A549 (cell line): ENCODE measurements at regions of chr16 and their contacts with region 1.

Region 1: DNA sequence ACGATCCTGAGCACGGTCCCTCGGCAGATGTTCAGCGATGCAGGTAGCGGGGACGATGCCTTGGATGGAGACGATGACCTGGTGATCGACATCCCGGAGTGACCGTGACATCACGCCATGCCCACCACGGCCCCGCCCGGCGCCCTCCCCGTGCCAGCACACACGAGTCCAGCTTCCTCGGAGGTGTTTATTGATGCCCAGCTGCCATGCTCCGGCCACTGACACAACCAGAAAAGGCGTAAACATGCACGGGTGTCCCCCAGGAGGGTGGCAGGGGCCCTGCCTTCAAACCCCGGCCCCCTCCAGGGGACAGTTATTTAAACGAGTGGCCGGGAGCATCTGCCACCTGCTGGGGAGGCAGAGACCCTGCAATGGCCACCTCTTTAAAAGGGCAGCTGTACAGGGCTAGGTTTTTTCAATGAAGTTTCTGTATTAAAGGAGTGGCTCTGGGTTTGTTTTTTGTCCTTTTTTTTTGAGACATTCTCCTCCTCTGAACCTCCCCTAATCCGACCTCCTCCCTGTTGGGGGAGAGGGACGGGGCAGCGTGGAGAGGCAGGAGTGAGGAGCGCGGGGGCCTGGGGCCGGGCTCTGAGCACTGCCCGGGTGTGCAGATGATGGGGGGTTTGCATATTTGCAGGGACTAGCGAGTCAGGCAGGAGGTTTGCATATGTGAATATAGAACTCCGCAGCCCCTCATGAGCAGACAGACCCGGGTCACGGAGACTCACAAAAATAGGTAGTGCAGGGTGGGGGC is 5.3 kb downstream of the DOC2A start:
- DNase-seq: peak; percentile 59 to 90
- ATAC-seq: peak; percentile 54 to 78; a peak in 5 of 6 replicates
- H3K4me3 ChIP-seq: no peak overlapping the region
- H3K27ac ChIP-seq: peak overlapping the region in 1 of 2 experiments; percentile 38; a peak in 3 of 6 replicates
- H3K4me1 ChIP-seq: peaks cover 10% of the 10 kb centered on the region; the same call in 2 of the 3 replicates
- CTCF ChIP-seq: peak; percentile 78
- EP300 ChIP-seq: no peak
- POLR2A ChIP-seq: no peak
- RAD21 ChIP-seq: peak; percentile 64 to 71

Region 2: GRCh38 chr16:29700253-29700987 is 305.1 kb before region 1 on chr16:
- CTCF ChIA-PET with region 1: interaction called, 12 read pairs
- POLR2A ChIA-PET with region 1: no interaction called
- DNase-seq: peak; percentile 92 to 96
- ATAC-seq: peak; percentile 93 to 94
- H3K4me3 ChIP-seq: no peak overlapping the region
- H3K27ac ChIP-seq: peak overlapping the region; percentile 34 to 55; a peak in 5 of 6 replicates
- H3K4me1 ChIP-seq: peaks cover 4% of the 10 kb centered on the region; the same call in 1 of the 3 replicates
- CTCF ChIP-seq: peak; percentile 96
- EP300 ChIP-seq: no peak
- POLR2A ChIP-seq: no peak
- RAD21 ChIP-seq: peak; percentile 94 to 95

Region 3: DNA sequence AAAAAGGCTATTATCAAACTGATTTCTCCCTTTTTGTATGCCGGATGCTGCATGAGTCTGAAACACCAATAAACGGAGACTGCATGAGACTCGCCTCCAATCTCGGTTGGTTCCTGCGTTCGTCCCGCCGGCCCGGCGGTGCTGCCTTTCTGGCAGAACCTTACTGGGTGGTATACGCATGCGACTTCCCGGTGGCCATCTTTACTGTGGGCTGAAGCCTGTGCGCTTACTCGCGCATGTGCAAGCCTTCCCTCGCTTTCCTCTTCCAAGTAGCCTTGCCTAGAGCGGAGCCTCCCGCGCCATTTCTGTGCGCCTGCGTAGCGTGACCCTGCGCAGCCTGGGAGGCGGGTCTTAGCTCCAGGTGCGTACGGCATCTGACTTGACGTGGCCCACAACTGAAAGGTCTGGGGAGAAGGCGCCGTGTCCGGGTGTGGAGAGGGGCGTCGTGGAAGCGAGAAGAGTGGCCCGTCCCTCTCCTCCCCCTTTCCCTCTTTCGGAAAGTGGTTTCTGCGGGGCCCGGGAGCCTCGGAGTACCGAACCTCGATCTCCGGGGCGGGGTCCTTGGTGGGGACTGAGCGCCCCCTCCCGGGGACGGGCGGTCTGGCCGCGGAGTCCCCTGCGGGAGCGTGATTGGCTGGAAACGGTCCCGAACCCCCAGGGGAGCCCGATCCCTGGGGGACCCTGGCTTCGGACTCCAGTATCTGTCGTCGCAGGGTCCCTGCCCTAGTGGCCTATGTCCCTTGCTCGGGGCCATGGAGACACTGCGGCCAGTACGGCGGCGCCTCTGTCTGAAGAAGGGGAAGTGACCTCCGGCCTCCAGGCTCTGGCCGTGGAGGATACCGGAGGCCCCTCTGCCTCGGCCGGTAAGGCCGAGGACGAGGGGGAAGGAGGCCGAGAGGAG is 189.5 kb before region 1 on chr16 and contains the start of gene PAGR1:
- CTCF ChIA-PET with region 1: interaction called, 18 read pairs
- POLR2A ChIA-PET with region 1: interaction called, 3 read pairs
- DNase-seq: peak; percentile 95 to 100
- ATAC-seq: peak; percentile 49 to 72
- H3K4me3 ChIP-seq: peak within 1 kb of the TSS; percentile 92
- H3K27ac ChIP-seq: peak within 1 kb of the TSS; percentile 98 to 99
- H3K4me1 ChIP-seq: peaks cover 39% of the 10 kb centered on the region
- CTCF ChIP-seq: peak; percentile 92
- EP300 ChIP-seq: no peak
- POLR2A ChIP-seq: peak; percentile 88
- RAD21 ChIP-seq: peak; percentile 51 to 68
- polyA plus RNA-seq, gene PAGR1: 18.9 and 26.7 TPM in 2 replicates

Region 4: GRCh38 chr16:29915590-29916247 is 89.8 kb before region 1 on chr16:
- CTCF ChIA-PET with region 1: interaction called, 14 read pairs
- POLR2A ChIA-PET with region 1: no interaction called
- DNase-seq: peak; percentile 29 to 37
- ATAC-seq: peak in 1 of 2 experiments; percentile 30; a peak in 2 of 6 replicates
- H3K4me3 ChIP-seq: no peak overlapping the region
- H3K27ac ChIP-seq: peak overlapping the region in 1 of 2 experiments; percentile 58; a peak in 2 of 6 replicates
- H3K4me1 ChIP-seq: peaks cover 9% of the 10 kb centered on the region; the same call in 2 of the 3 replicates
- CTCF ChIP-seq: no peak
- EP300 ChIP-seq: no peak
- POLR2A ChIP-seq: no peak
- RAD21 ChIP-seq: no peak

Region 5: DNA sequence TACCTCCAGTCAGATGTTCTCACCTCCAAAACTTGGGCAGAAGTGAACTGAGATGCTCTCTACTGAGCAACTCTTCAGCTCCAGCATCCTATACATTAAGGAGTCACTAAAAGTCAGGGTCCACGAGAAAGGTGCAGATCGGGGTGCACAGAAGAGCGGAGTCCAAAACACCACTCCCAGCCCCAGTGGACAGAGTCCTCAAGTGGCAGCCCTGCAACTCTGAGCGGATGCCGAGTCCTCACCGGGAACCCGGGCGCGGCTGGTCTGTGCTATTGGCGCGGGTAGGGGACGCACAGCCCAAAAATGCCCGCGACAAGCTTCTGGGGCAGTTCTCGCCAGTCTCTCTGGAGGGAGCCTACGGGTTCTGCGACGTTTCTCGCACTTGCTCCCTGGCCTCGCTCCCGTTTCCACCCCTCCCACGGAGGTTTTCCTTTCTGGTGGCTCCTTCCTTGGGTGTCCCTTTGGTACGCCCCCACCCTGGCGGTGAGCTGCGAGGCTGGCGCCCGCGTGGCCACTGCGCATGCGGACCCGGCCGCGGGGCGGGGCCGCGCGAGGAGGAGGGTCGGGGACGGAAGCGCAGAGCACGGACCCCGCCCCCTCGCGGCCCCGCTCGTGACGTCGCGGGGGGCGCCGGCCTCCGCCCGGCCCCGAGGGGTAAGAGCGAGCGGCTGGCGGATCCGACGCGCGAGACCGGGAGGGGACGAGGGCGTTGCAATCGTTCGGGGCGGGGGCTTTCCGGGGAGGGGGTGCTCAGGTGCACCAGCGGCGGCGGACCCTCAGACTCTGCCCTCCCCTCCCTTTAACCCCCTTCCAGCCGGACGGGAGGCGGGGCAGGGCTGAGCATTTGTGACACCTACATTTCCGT is 43.8 kb before region 1 on chr16 and contains the start of gene TMEM219:
- CTCF ChIA-PET with region 1: interaction called, 10 read pairs
- POLR2A ChIA-PET with region 1: no interaction called
- DNase-seq: peak; percentile 88 to 94
- ATAC-seq: peak; percentile 96 to 97
- H3K4me3 ChIP-seq: peak within 1 kb of the TSS; percentile 74
- H3K27ac ChIP-seq: peak within 1 kb of the TSS; percentile 86 to 96
- H3K4me1 ChIP-seq: peaks cover 12% of the 10 kb centered on the region; the same call in 1 of the 3 replicates
- CTCF ChIP-seq: no peak; the same call in 1 of the 3 replicates
- EP300 ChIP-seq: no peak
- POLR2A ChIP-seq: peak; percentile 53
- RAD21 ChIP-seq: peak in 1 of 2 experiments; percentile 47; a peak in 4 of 5 replicates
- polyA plus RNA-seq, gene TMEM219: 65.1 and 82.5 TPM in 2 replicates

Region 6: DNA sequence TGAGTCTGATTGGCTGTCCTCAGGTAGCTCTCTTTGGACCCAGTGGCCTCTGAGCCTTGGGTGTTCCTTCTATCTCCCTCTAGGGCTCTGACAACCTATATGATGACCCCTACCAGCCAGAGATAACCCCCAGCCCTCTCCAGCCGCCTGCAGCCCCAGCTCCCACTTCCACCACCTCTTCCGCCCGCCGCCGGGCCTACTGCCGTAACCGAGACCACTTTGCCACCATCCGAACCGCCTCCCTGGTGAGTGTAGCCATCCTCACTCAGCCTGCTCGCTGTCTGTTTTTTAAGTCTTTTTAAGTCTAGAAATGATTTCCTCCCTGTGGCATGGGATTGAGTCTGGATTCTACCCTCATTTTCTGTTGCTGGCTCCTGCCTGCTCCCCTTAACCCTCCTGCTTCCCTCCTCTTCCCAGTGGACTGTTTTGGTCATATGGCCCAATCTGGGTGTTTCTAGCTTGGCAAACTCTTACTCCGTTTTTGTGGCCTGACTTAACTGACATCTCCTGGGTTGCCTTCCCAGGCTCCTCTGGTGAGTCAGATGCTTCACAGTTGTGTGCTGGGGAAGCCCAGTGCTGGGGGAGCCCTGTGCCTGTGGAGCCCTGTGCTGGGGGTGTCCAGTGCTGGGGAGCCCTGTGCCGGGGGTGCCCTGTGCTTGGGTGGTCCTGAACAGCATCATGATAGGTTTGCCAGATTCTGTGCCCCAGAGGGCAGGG is 21.9 kb before region 1 on chr16:
- CTCF ChIA-PET with region 1: interaction called, 22 read pairs
- POLR2A ChIA-PET with region 1: no interaction called
- DNase-seq: no peak
- ATAC-seq: no peak
- H3K4me3 ChIP-seq: no peak overlapping the region
- H3K27ac ChIP-seq: no peak overlapping the region
- H3K4me1 ChIP-seq: no peaks in the 10 kb centered on the region
- CTCF ChIP-seq: no peak
- EP300 ChIP-seq: no peak
- POLR2A ChIP-seq: no peak
- RAD21 ChIP-seq: no peak

Region 7: GRCh38 chr16:30068333-30069211 is 63.1 kb after region 1 on chr16:
- CTCF ChIA-PET with region 1: no interaction called
- POLR2A ChIA-PET with region 1: no interaction called
- DNase-seq: peak in 1 of 2 experiments; percentile 59
- ATAC-seq: no peak
- H3K4me3 ChIP-seq: no peak overlapping the region
- H3K27ac ChIP-seq: peak overlapping the region in 1 of 2 experiments; percentile 17; a peak in 1 of 6 replicates
- H3K4me1 ChIP-seq: peaks cover 29% of the 10 kb centered on the region
- CTCF ChIP-seq: peak; percentile 42
- EP300 ChIP-seq: no peak
- POLR2A ChIP-seq: no peak
- RAD21 ChIP-seq: peak; percentile 38; a peak in 3 of 5 replicates